Activated T-helper 2 cell treated with anti-CD3 and anti-CD28 coated beads, Interferon-gamma antibody, Interleukin-2, Interleukin-4, amounts not matched to agents 10 μg/mL and 5 μg/mL and 100 μg/mL, durations not matched to agents 14 hours and 24 hours and 36 hours (primary cell): ENCODE measurements at regions of chr9 and their contacts with region 1.

Region 1: GRCh38 chr9:69759421-69760277 is at the start of gene PTAR1:
- DNase-seq: peak; percentile 87
- H3K4me3 Mint-ChIP-seq: peak within 1 kb of the TSS; percentile 97
- H3K27ac Mint-ChIP-seq: peak within 1 kb of the TSS; percentile 94
- H3K4me1 Mint-ChIP-seq: peaks cover 25% of the 10 kb centered on the region
- H3K27me3 Mint-ChIP-seq: no peaks in the 10 kb centered on the region
- total RNA-seq, gene PTAR1: 51.1 and 57.2 TPM in 2 replicates

Region 2: GRCh38 chr9:69672596-69673310 is 86.9 kb before region 1 on chr9:
- intact Hi-C with region 1: loop called (anchors 1 kb)
- DNase-seq: peak; percentile 68
- H3K4me3 Mint-ChIP-seq: peak overlapping the region; percentile 83
- H3K27ac Mint-ChIP-seq: no peak overlapping the region
- H3K4me1 Mint-ChIP-seq: peaks cover 21% of the 10 kb centered on the region
- H3K27me3 Mint-ChIP-seq: peaks cover 40% of the 10 kb centered on the region

Region 3: GRCh38 chr9:69834591-69835184 is 75.0 kb after region 1 on chr9:
- intact Hi-C with region 1: loop called (anchors 5 kb)
- DNase-seq: no peak
- H3K4me3 Mint-ChIP-seq: peak overlapping the region; percentile 33
- H3K27ac Mint-ChIP-seq: peak overlapping the region; percentile 78
- H3K4me1 Mint-ChIP-seq: peaks cover 50% of the 10 kb centered on the region
- H3K27me3 Mint-ChIP-seq: no peaks in the 10 kb centered on the region